ENCODE measurements at regions of chr9 and their contacts with region 1.

Region 1: DNA sequence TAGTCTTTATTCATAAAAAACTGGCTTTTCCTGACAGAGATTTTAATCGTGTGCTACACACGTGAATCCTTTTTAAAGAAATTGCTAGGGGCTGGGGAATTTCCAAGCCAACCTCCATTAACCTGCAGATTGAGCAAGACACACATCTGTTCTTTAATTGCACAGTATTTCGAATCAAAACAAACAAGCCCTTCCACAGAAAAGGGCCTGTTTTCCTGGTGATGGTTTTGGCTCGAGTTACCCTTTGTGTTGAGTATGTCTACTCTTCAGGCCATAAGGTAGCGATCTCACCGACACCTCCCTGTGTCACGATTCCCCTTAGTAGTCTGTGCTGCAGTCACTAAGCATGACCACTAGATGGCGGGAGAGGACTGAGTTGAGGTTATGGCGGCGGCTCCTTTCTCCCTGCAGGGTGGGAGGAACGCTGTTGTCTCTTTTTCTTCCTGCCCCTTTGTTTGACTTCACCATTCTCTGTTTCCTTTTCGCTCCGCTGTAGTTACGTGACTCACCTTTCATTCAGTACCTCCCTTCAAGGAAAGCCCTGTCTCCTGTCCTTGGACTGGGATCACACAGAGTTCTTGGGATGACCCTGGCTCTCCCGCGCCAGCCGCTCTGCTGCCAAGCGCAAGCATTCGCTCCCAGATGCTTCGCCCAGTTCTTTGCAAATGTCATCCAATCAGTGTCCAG is 137.1 kb upstream of the SLC24A2 start:
- DNase-seq: peak; percentile 54 to 87 (median 82)
- ATAC-seq: peak; percentile 99
- H3K4me3 ChIP-seq: peak overlapping the region; percentile 42
- H3K4me3 Mint-ChIP-seq: peak overlapping the region; percentile 69 to 84 (median 79)
- H3K27ac ChIP-seq: no peak overlapping the region
- H3K27ac Mint-ChIP-seq: peak overlapping the region in 7 of 9 donors; percentile 23 to 53 (median 35)
- H3K4me1 ChIP-seq: peaks cover 0 to 7% of the 10 kb centered on the region in 2 donors
- H3K4me1 Mint-ChIP-seq: peaks cover 0 to 39% (median 8%) of the 10 kb centered on the region in 7 donors
- H3K27me3 ChIP-seq: no peaks in the 10 kb centered on the region
- H3K27me3 Mint-ChIP-seq: peaks cover 0 to 14% (median 3%) of the 10 kb centered on the region in 5 donors

Region 2: DNA sequence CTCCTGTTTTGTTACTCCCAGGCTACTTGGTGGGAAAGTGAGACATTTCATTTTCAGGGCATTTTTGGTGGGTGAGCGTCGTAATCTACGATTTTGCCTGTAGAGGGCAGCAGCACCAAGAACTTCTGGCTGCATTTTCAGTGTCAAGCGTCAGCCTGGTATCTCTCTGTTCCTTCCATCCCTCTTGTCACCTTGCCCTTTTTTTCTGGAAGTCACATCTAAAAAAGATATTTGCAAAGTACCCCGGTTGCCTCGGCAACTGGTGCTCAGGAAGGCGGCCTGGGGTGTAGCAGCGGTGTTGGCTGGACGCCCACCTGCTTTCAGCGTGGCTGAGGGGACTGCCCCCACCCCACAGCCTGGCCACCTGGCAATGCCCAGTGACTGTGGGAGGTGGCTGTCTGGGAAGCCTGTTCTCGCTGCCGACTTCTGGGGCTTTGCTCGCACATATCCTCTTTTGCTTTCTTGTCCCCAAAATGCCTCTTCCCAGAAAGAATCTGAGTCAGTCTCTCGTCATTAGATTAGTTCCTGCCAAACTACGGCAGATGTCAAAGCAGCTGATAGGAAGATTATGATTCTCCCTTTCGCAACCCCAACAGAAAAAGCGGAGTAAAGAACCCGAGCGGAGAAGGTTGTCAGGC is 432.7 kb before region 1 on chr9:
- CTCF ChIA-PET with region 1: no interaction called
- POLR2A ChIA-PET with region 1: no interaction called
- intact Hi-C with region 1: loop called (anchors 5 to 10 kb)
- DNase-seq: peak in 7 of 9 donors; percentile 10 to 51 (median 36)
- ATAC-seq: peak; percentile 77
- H3K4me3 ChIP-seq: peak overlapping the region; percentile 26
- H3K4me3 Mint-ChIP-seq: peak overlapping the region in 9 of 10 donors; percentile 8 to 54 (median 34)
- H3K27ac ChIP-seq: no peak overlapping the region
- H3K27ac Mint-ChIP-seq: no peak overlapping the region
- H3K4me1 ChIP-seq: no peaks in the 10 kb centered on the region
- H3K4me1 Mint-ChIP-seq: peaks cover 0 to 14% (median 11%) of the 10 kb centered on the region in 7 donors
- H3K27me3 ChIP-seq: peaks cover 0 to 4% of the 10 kb centered on the region in 2 donors
- H3K27me3 Mint-ChIP-seq: peaks cover 0 to 21% (median 10%) of the 10 kb centered on the region in 5 donors

Region 3: DNA sequence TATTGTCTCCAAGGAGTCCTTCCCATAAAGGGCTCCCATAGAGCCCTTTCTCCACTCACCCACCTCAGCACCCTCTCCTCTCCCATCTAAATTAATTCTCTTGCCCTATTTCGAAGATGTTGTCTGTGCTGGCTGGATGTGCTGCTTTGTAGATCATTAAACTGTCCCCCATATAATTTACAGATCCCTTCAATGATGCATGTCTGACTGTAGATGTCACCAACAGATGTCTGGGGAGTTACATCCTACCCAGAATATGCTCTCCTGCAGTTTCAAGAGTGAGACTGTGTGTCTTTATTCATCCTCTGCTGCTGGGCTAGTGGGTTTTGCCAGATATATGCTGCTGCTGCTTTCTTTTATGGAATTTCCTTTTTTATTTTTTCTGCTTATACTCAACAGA is 345.1 kb after region 1 on chr9:
- CTCF ChIA-PET with region 1: no interaction called
- POLR2A ChIA-PET with region 1: no interaction called
- intact Hi-C with region 1: loop called in 1 of 2 experiments (anchors 1 kb)
- DNase-seq: peak in 5 of 9 donors; percentile 9 to 34 (median 25)
- ATAC-seq: no peak
- H3K4me3 ChIP-seq: no peak overlapping the region
- H3K4me3 Mint-ChIP-seq: no peak overlapping the region
- H3K27ac ChIP-seq: no peak overlapping the region
- H3K27ac Mint-ChIP-seq: peak overlapping the region in 5 of 9 donors; percentile 0 to 42 (median 12)
- H3K4me1 ChIP-seq: no peaks in the 10 kb centered on the region
- H3K4me1 Mint-ChIP-seq: peaks cover 7 to 35% (median 12%) of the 10 kb centered on the region in 7 donors
- H3K27me3 ChIP-seq: no peaks in the 10 kb centered on the region
- H3K27me3 Mint-ChIP-seq: no peaks in the 10 kb centered on the region

Region 4: DNA sequence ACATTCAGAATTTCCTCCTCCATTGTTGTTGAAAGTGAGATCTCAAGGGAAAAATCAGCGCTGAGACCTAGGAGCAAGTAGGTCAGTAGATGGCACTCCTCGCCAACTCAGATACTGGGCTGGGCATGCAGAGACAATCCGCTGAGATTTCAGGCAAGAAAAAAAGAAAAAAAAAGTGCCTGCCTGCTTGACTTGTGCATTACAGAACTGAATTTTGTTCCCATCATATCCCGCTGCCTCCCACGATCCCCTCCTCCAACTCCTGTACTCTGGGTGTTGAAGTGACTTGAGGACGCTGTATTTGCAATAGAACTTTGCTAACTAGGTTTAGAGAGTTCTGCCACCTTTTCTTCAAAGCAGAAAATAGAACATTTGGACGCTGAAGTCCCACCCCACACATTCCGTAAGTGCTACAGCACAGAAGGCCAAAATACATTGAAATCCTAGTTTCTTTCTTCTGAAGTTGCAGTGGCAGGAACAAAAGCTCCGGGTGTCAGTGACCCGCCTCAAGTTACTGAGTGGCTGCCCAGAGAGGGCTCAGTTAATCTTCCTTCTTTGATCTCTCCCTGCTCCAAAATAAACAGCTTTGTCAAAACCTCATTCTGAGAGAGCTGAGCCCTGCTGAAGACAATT is 430.6 kb after region 1 on chr9:
- CTCF ChIA-PET with region 1: interaction called, 3 read pairs
- POLR2A ChIA-PET with region 1: no interaction called
- intact Hi-C with region 1: loop called (anchors 1 to 2 kb)
- DNase-seq: peak; percentile 8 to 78 (median 66)
- ATAC-seq: peak; percentile 82
- H3K4me3 ChIP-seq: no peak overlapping the region
- H3K4me3 Mint-ChIP-seq: peak overlapping the region in 7 of 10 donors; percentile 12 to 76 (median 55)
- H3K27ac ChIP-seq: no peak overlapping the region
- H3K27ac Mint-ChIP-seq: peak overlapping the region; percentile 5 to 94 (median 79)
- H3K4me1 ChIP-seq: peaks cover 0 to 29% of the 10 kb centered on the region in 2 donors
- H3K4me1 Mint-ChIP-seq: peaks cover 24 to 83% (median 55%) of the 10 kb centered on the region in 7 donors
- H3K27me3 ChIP-seq: no peaks in the 10 kb centered on the region
- H3K27me3 Mint-ChIP-seq: no peaks in the 10 kb centered on the region

Region 5: GRCh38 chr9:20684035-20684872 is 758.3 kb after region 1 on chr9 and contains the start of gene FOCAD:
- CTCF ChIA-PET with region 1: no interaction called
- POLR2A ChIA-PET with region 1: no interaction called
- intact Hi-C with region 1: loop called (anchors 2 to 5 kb)
- DNase-seq: peak; percentile 94 to 99 (median 96)
- ATAC-seq: peak; percentile 99
- H3K4me3 ChIP-seq: peak within 1 kb of the TSS; percentile 95
- H3K4me3 Mint-ChIP-seq: peak within 1 kb of the TSS; percentile 89 to 98 (median 96)
- H3K27ac ChIP-seq: peak within 1 kb of the TSS; percentile 81
- H3K27ac Mint-ChIP-seq: peak within 1 kb of the TSS; percentile 78 to 96 (median 92)
- H3K4me1 ChIP-seq: peaks cover 0 to 6% of the 10 kb centered on the region in 2 donors
- H3K4me1 Mint-ChIP-seq: peaks cover 11 to 29% (median 24%) of the 10 kb centered on the region in 7 donors
- H3K27me3 ChIP-seq: no peaks in the 10 kb centered on the region
- H3K27me3 Mint-ChIP-seq: no peaks in the 10 kb centered on the region
- total RNA-seq, gene FOCAD: 12.8 to 33.7 (median 22.3) TPM

Region 6: DNA sequence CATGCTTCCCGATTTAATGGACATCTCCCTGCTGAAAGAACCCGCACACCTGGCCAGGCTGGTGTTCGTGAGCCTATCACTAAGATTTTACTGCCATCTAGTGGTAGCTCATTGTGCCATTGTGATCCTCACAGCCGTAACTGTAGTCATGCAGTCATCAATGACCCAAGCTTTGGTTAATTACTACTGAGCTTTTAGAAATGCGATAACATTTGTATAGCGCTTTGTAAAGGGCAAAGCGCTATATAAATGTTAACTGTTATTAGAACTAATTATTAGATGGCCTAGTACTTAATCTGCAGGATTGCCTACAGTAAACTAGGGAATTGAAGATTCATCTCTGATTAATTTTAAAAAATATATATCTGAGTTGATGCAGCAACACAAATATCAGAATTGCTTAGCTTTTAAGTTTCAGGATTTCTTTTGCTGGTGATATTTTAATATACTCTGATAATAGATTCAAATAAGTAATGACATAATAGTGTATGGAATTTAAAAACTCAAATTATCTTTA is 1015.3 kb after region 1 on chr9:
- CTCF ChIA-PET with region 1: interaction called, 65 read pairs
- POLR2A ChIA-PET with region 1: no interaction called
- intact Hi-C with region 1: loop called (anchors 1 kb)
- DNase-seq: peak; percentile 13 to 73 (median 62)
- ATAC-seq: peak; percentile 95
- H3K4me3 ChIP-seq: no peak overlapping the region
- H3K4me3 Mint-ChIP-seq: peak overlapping the region in 1 of 10 donors; percentile 20
- H3K27ac ChIP-seq: no peak overlapping the region
- H3K27ac Mint-ChIP-seq: peak overlapping the region in 3 of 9 donors; percentile 13 to 29 (median 29)
- H3K4me1 ChIP-seq: no peaks in the 10 kb centered on the region
- H3K4me1 Mint-ChIP-seq: peaks cover 0 to 8% (median 5%) of the 10 kb centered on the region in 7 donors
- H3K27me3 ChIP-seq: no peaks in the 10 kb centered on the region
- H3K27me3 Mint-ChIP-seq: no peaks in the 10 kb centered on the region

Region 7: DNA sequence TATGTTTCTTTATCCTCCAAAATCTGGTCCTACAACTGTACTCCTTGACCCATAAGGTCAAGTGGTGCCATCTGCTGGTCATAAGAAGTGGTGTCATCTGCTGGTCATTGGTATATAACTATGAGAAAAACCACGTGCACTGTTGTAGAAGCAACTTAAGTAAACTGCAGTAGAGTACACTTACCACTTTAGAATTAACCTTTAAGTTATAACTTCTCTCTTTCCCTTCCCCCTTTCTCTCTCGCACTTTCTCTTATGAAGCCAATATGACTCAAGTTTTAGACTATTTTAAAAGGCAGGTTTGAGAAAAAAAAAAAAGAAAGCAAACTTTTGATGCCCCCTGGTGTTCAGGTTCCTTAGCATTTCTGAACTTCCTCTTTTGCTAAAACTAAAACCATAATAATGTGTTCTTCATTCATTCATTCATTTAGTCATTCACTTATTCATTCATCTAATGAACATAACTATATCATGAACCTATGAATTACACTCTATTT is 1863.6 kb after region 1 on chr9:
- CTCF ChIA-PET with region 1: interaction called, 5 read pairs
- POLR2A ChIA-PET with region 1: no interaction called
- intact Hi-C with region 1: loop called in 1 of 2 experiments (anchors 2 kb)
- DNase-seq: peak in 7 of 9 donors; percentile 60 to 80 (median 72)
- ATAC-seq: peak; percentile 98
- H3K4me3 ChIP-seq: peak overlapping the region; percentile 18
- H3K4me3 Mint-ChIP-seq: peak overlapping the region in 9 of 10 donors; percentile 55 to 85 (median 73)
- H3K27ac ChIP-seq: no peak overlapping the region
- H3K27ac Mint-ChIP-seq: peak overlapping the region in 4 of 9 donors; percentile 11 to 63 (median 36)
- H3K4me1 ChIP-seq: no peaks in the 10 kb centered on the region
- H3K4me1 Mint-ChIP-seq: peaks cover 0 to 7% (median 0%) of the 10 kb centered on the region in 7 donors
- H3K27me3 ChIP-seq: no peaks in the 10 kb centered on the region
- H3K27me3 Mint-ChIP-seq: peaks cover 0 to 45% (median 0%) of the 10 kb centered on the region in 5 donors

Measured in naive thymus-derived CD4-positive, alpha-beta T cell (primary cell).